ENCODE measurements at regions of chr6 and their contacts with region 1.

Region 1: GRCh38 chr6:27772261-27773001 is 139.8 kb downstream of the OR2B2 start:
- DNase-seq: peak; percentile 94
- ATAC-seq: peak; percentile 99
- H3K4me3 ChIP-seq: no peak overlapping the region
- H3K27ac ChIP-seq: no peak overlapping the region
- H3K4me1 ChIP-seq: peaks cover 4% of the 10 kb centered on the region
- H3K27me3 ChIP-seq: peaks cover 11% of the 10 kb centered on the region
- CTCF ChIP-seq: peak; percentile 92

Region 2: DNA sequence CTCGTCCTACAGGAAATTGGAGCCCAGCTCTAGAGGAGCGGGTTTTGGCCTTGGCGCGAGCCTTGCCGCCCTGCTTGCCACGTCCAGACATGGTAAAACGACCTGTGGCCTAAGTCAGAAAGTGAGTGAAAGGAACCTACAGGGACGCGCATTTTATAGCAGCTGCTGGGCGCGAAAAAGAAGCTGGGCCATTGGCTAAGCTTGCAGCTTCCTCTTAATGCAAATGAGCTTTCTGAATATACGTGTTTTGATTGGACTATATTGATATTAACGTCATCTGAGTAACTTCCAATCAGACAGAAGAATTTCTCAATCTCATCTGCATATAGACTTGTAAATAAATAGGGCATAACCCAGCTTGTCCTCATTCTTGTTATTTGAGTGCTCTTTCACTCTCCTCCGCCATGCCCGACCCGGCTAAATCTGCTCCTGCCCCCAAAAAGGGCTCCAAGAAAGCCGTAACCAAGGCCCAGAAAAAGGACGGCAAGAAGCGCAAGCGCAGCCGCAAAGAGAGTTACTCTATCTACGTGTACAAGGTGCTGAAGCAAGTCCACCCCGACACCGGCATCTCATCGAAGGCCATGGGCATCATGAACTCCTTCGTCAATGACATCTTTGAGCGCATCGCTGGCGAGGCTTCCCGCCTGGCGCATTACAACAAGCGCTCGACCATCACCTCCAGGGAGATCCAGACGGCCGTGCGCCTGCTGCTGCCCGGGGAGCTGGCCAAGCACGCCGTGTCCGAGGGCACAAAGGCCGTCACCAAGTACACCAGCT is 120.8 kb after region 1 on chr6:
- intact Hi-C with region 1: loop called (anchors 10 kb)
- DNase-seq: peak; percentile 89
- ATAC-seq: peak; percentile 83
- H3K4me3 ChIP-seq: peak overlapping the region; percentile 70
- H3K27ac ChIP-seq: peak overlapping the region; percentile 72
- H3K4me1 ChIP-seq: peaks cover 23% of the 10 kb centered on the region
- H3K27me3 ChIP-seq: peaks cover 25% of the 10 kb centered on the region
- CTCF ChIP-seq: no peak

Measured in upper lobe of right lung (tissue), 1 donor.